Cardiac septum (tissue), 1 donor: ENCODE measurements at regions of chr6 and their contacts with region 1.

Region 1: DNA sequence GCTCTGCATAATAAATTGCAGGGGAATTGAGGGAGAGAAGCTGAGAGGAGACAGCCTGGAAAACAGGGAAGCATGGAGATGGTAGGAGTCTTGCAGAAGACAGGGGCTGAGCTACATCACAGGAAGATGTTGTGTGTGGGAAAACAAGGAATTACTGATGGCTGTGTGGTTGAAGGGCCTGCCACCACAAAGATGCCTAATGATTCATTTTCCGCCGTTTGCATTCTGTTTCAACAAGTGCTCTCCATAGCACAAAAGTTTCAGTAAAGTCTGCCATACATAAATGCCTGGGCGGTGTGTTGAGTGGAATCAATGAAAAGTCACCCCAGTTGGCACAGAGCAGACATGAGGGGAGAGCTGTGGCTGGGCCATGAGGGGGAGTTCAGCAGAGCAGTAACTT is 5.6 kb upstream of the KLHL31 start:
- DNase-seq: no peak

Region 2: DNA sequence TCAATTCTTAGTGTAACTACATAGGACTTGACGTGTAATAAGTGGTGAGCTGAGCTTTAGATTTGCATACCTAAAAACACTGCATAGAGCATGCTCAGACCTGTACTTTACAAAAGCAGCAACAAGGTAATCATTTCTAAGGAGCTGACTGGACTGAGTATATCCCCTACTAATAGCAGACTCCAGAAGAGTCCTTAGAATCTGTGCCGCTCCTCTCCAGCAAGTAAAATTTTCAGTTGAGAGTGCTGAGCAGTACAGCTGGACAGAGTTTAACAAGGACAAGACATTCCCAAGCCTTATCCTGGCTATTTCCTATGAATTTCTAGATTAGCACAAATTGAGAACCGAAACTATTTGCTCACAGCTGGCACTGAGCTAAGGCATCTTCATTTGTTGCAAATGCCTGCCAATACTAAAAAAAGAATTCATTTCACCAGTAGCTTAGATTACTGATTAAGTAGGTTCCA is 20.6 kb after region 1 on chr6:
- intact Hi-C with region 1: loop called (anchors 2 kb)
- DNase-seq: no peak